AG04450 (cell line): ENCODE measurements at regions of chr1 and their contacts with region 1.

Region 1: DNA sequence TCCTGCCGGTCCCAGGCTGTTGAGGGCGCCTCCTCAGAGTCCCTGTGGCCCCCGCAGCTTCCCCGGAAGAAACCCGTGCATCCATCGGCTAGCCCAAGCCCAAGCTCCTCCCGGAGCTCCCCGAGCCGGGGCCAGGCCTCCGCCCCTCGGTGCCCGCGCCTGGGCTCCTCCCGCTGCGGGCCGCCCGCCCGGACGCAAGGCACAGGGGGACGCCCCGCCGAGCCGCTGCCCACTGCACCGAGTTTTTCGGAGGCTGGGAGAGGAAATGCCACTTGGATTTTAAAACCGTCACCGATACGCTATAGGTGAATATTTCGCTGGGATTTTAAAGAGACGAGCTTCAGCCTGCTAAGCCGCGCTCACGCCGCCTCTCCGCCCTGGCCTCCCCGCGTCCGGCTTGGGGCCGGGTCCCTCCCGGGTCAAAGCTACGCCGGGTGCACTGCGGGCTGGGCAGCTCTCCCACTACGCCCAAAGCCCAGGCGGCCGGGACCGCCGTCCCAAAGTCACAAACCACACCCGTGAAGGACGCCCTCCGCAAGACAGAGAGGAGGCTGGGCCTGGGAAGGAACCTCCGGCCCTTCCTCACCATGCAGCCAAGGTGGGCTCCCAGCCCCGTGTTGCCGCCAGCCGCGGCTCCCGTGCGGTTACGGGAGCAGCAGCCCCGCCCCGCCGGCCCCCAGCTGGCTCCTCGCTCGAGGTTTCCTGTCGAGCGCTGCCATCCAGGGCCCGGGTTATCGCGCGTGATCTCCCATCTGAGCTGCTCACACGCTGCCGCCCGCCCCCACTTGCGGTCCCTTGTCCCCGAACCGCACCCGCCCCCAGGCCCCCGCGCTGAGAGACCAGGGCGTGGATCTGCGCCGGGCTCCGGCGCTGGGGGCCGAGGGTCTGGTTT is 63.2 kb downstream of the CD247 start:
- DNase-seq: no peak
- H3K4me3 ChIP-seq: peak overlapping the region; percentile 70
- H3K27ac ChIP-seq: no peak overlapping the region
- H3K27me3 ChIP-seq: peaks cover 24% of the 10 kb centered on the region
- CTCF ChIP-seq: no peak

Region 2: GRCh38 chr1:167066333-167067122 is 388.6 kb before region 1 on chr1:
- CTCF ChIA-PET with region 1: interaction called, 15 read pairs
- POLR2A ChIA-PET with region 1: no interaction called
- DNase-seq: no peak
- H3K4me3 ChIP-seq: peak overlapping the region; percentile 36; the same call in 1 of the 2 replicates
- H3K27ac ChIP-seq: no peak overlapping the region
- H3K27me3 ChIP-seq: no peaks in the 10 kb centered on the region
- CTCF ChIP-seq: peak; percentile 94

Region 3: GRCh38 chr1:167375939-167376338 is 79.2 kb before region 1 on chr1:
- CTCF ChIA-PET with region 1: no interaction called
- POLR2A ChIA-PET with region 1: no interaction called
- DNase-seq: no peak
- H3K4me3 ChIP-seq: no peak overlapping the region
- H3K27ac ChIP-seq: no peak overlapping the region
- H3K27me3 ChIP-seq: no peaks in the 10 kb centered on the region
- CTCF ChIP-seq: no peak